Gastrocnemius medialis (tissue), 4 donors: ENCODE measurements at regions of chr18 and their contacts with region 1.

Region 1: DNA sequence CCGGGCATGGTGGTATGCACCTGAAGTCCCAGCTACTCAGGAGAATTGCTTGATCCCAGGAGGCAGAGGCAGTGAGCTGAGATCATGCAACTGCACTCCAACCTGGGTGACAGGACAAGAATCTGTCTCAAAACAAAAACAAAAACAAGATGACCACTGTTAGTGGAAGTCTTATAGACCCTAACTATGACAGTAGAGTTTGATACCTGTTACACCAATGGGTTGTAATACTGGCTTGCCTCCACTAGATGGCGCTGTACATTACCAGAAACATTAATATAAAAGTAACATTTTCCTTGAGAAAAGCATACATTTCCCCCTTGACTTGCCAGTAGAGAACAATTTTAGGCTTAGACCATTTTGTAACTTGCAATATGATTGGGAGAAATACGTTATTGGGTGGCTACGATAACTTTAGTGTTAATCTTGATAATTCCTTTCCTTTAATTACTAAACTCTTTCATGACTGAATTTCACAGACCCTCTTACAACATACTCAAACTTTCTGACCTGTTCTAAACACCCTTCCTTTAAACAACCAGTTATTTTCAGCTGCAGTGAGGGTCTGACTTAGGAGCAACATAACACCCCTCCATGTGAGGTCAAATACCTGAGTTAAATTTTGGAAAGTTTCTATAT is 19.5 kb downstream of the SLC25A52 start:
- DNase-seq: no peak
- ATAC-seq: no peak
- H3K4me3 ChIP-seq: no peak overlapping the region
- H3K27ac ChIP-seq: no peak overlapping the region
- H3K4me1 ChIP-seq: peaks cover 5 to 7% of the 10 kb centered on the region in 2 donors
- H3K27me3 ChIP-seq: no peaks in the 10 kb centered on the region
- CTCF ChIP-seq: peak; percentile 65 to 86 (median 76)
- POLR2A ChIP-seq: no peak

Region 2: GRCh38 chr18:31801078-31801477 is 59.9 kb after region 1 on chr18:
- in situ Hi-C with region 1: no loop called
- intact Hi-C with region 1: no loop called
- DNase-seq: no peak
- ATAC-seq: no peak
- H3K4me3 ChIP-seq: no peak overlapping the region
- H3K27ac ChIP-seq: no peak overlapping the region
- H3K4me1 ChIP-seq: no peaks in the 10 kb centered on the region
- H3K27me3 ChIP-seq: no peaks in the 10 kb centered on the region
- CTCF ChIP-seq: no peak
- POLR2A ChIP-seq: no peak

Region 3: DNA sequence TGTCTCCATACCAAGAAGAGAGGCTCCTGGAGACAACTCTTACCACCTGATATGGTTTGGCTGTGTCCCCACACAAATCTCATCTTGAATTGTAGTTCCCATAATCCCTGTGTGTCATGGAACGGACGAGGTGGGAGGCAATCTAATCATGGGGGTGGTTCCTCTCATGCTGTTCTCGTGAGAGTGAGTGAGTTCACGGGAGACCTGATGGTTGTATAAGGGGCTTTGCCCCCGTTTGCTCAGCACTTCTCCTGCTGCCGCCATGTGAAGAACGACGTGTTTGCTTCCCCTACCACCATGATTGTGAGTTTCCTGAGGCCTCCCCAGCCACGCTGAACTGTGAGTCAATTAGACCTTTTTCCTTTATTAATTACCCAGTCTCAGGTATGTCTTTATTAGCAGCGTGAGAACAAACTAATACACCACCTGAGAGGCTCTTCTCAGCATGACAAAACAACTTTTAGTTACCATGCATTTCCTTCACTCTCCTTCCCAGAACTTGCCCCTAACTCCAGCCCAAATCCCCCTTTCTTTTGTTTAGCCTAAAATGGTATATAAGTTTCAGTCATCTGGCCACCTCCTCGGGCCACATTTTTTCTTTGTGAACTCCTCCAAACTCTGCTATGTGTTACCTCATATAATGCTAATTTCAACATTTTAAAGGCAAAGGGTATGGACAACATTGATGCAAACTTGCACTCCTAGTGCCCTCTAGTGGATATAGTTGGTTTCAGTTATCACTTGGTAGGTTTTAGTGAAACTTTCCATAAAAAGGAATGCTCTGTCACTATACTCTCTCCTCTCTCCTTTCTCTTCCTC is 78.1 kb after region 1 on chr18:
- in situ Hi-C with region 1: no loop called
- intact Hi-C with region 1: loop called (anchors 2 kb)
- DNase-seq: no peak
- ATAC-seq: peak in 1 of 2 donors; percentile 58
- H3K4me3 ChIP-seq: no peak overlapping the region
- H3K27ac ChIP-seq: no peak overlapping the region
- H3K4me1 ChIP-seq: no peaks in the 10 kb centered on the region
- H3K27me3 ChIP-seq: no peaks in the 10 kb centered on the region
- CTCF ChIP-seq: peak in 4 of 5 experiments; percentile 24 to 62 (median 53)
- POLR2A ChIP-seq: no peak

Region 4: GRCh38 chr18:31954349-31954748 is 213.1 kb after region 1 on chr18:
- in situ Hi-C with region 1: loop called in 1 of 4 experiments (anchors 25 kb)
- intact Hi-C with region 1: no loop called
- DNase-seq: no peak
- ATAC-seq: no peak
- H3K4me3 ChIP-seq: no peak overlapping the region
- H3K27ac ChIP-seq: no peak overlapping the region
- H3K4me1 ChIP-seq: no peaks in the 10 kb centered on the region
- H3K27me3 ChIP-seq: no peaks in the 10 kb centered on the region
- CTCF ChIP-seq: no peak
- POLR2A ChIP-seq: no peak

Region 5: GRCh38 chr18:31977270-31977872 is 236.2 kb after region 1 on chr18:
- in situ Hi-C with region 1: loop called (anchors 10 to 25 kb)
- intact Hi-C with region 1: loop called (anchors 5 kb)
- DNase-seq: peak in 1 of 2 donors; percentile 10
- ATAC-seq: peak; percentile 66 to 85
- H3K4me3 ChIP-seq: no peak overlapping the region
- H3K27ac ChIP-seq: no peak overlapping the region
- H3K4me1 ChIP-seq: no peaks in the 10 kb centered on the region
- H3K27me3 ChIP-seq: no peaks in the 10 kb centered on the region
- CTCF ChIP-seq: peak; percentile 54 to 82 (median 73)
- POLR2A ChIP-seq: no peak